Activated CD8-positive, alpha-beta T cell treated with anti-CD3 and anti-CD28 coated beads for 36 hours (primary cell): ENCODE measurements at regions of chr2 and their contacts with region 1.

Region 1: DNA sequence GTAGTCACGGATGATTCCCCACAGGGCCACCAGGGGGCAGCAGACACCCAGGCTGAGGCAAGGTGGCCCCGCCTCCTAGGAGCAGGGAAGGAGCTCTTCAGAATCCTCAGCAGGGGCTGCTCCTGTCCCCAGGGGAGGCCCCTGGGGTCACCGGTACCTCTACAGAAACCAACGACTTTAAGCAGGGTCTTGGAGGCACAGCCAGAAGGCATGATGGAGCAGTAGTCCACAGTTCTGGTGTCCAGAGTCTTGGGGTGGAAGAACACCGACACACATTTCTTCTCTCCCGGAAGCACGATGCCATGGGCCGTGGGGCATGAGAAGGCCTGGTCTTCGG is 11.5 kb downstream of the CFAP65 start:
- DNase-seq: peak; percentile 86
- ATAC-seq: peak; percentile 95
- H3K4me3 Mint-ChIP-seq: no peak overlapping the region
- H3K27ac Mint-ChIP-seq: no peak overlapping the region
- H3K4me1 Mint-ChIP-seq: no peaks in the 10 kb centered on the region
- H3K27me3 Mint-ChIP-seq: peaks cover 14% of the 10 kb centered on the region
- CTCF ChIP-seq: peak; percentile 92

Region 2: DNA sequence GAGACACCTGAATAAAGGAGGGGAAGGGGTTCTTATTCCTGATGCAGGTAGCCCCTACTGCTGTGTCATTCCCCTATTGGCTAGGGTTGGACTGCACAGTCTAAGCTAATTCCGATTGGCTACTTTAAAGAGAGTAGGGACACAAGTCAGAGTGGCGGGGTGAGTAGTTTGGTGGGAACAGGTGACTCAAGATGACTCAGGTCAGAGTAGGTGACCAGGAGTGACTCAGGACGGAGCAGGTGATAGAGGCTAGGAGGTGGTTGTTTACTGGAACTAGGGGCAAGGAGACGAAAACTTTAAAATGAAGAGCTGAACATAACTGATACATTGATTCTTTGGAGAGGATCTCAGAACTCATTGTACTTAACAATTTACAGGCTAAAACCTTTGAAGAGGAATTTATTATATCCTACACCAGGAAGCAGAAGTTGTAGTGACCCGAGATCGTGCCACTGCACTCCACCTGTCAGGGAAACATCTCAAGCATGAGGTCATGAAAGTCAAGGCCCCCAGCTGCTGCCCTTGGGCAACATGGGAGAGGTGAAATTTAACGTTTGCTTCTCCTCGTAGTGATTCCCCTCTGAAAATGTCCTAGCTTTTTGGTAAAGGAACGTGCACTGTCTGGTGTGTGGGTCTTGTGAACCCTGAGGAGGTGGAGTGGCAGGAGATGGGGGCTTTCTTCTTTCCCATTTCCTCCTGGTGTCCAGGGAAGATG is 252.4 kb before region 1 on chr2:
- CTCF ChIA-PET with region 1: no interaction called
- POLR2A ChIA-PET with region 1: no interaction called
- intact Hi-C with region 1: no loop called
- DNase-seq: no peak
- ATAC-seq: no peak
- H3K4me3 Mint-ChIP-seq: no peak overlapping the region
- H3K27ac Mint-ChIP-seq: no peak overlapping the region
- H3K4me1 Mint-ChIP-seq: peaks cover 5% of the 10 kb centered on the region
- H3K27me3 Mint-ChIP-seq: peaks cover 25% of the 10 kb centered on the region
- CTCF ChIP-seq: no peak

Region 3: GRCh38 chr2:218944759-218945404 is 84.9 kb before region 1 on chr2:
- CTCF ChIA-PET with region 1: no interaction called
- POLR2A ChIA-PET with region 1: no interaction called
- intact Hi-C with region 1: no loop called
- DNase-seq: no peak
- ATAC-seq: no peak
- H3K4me3 Mint-ChIP-seq: no peak overlapping the region
- H3K27ac Mint-ChIP-seq: no peak overlapping the region
- H3K4me1 Mint-ChIP-seq: no peaks in the 10 kb centered on the region
- H3K27me3 Mint-ChIP-seq: peaks cover 33% of the 10 kb centered on the region
- CTCF ChIP-seq: no peak

Region 4: GRCh38 chr2:219002395-219003266 is 27.2 kb before region 1 on chr2:
- CTCF ChIA-PET with region 1: interaction called, 11 read pairs
- POLR2A ChIA-PET with region 1: no interaction called
- intact Hi-C with region 1: no loop called
- DNase-seq: peak; percentile 77
- ATAC-seq: peak; percentile 47
- H3K4me3 Mint-ChIP-seq: peak overlapping the region; percentile 66
- H3K27ac Mint-ChIP-seq: no peak overlapping the region
- H3K4me1 Mint-ChIP-seq: peaks cover 11% of the 10 kb centered on the region
- H3K27me3 Mint-ChIP-seq: peaks cover 62% of the 10 kb centered on the region
- CTCF ChIP-seq: peak; percentile 46

Region 5: DNA sequence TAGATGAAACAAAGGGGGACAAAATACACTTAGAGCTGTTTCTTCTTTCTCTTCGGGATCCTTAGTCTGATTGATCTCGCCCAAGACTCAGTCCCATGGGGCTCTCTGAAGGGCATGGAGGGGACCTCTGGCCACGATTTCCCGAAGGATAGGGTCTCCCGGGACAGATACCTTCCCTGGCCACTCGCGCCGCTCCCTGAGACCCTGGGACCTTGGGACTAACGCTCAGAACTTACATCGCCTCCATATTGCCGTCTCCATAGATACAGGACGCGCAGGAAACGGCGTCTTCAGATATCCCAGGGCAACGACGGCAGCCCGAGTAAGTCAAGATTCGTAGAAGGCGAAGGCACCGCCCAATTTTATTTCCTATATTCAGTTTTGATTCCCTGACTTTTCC is 11.5 kb after region 1 on chr2 and contains the start of gene CFAP65:
- CTCF ChIA-PET with region 1: interaction called, 29 read pairs
- POLR2A ChIA-PET with region 1: no interaction called
- intact Hi-C with region 1: no loop called
- DNase-seq: peak; percentile 64
- ATAC-seq: peak; percentile 60
- H3K4me3 Mint-ChIP-seq: peak within 1 kb of the TSS; percentile 46
- H3K27ac Mint-ChIP-seq: no peak within 1 kb of the TSS
- H3K4me1 Mint-ChIP-seq: peaks cover 6% of the 10 kb centered on the region
- H3K27me3 Mint-ChIP-seq: peaks cover 58% of the 10 kb centered on the region
- CTCF ChIP-seq: no peak
- total RNA-seq, gene CFAP65: not detected

Region 6: DNA sequence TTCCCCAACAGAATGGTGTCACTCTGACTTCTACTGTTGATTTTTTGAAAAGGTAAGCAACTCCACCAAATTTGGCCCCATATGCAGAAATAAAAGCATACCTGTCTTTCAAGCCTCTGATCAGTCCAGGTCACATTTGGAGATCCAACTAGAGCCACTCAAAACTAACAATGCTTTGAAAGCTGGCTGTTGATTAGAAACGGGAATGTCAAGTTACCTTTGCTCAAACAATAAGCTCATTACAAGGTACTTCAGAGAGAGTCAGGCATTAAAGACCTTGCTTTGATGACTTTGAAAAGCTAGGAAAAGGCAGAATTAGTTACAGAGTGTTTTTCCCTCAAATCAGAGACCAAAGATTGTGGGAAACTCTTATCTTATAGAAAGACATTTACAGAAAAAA is 35.7 kb after region 1 on chr2:
- CTCF ChIA-PET with region 1: interaction called, 15 read pairs
- POLR2A ChIA-PET with region 1: no interaction called
- intact Hi-C with region 1: no loop called
- DNase-seq: no peak
- ATAC-seq: no peak
- H3K4me3 Mint-ChIP-seq: no peak overlapping the region
- H3K27ac Mint-ChIP-seq: no peak overlapping the region
- H3K4me1 Mint-ChIP-seq: peaks cover 2% of the 10 kb centered on the region
- H3K27me3 Mint-ChIP-seq: peaks cover 28% of the 10 kb centered on the region
- CTCF ChIP-seq: no peak

Region 7: GRCh38 chr2:219109471-219109870 is 79.7 kb after region 1 on chr2:
- CTCF ChIA-PET with region 1: interaction called, 17 read pairs
- POLR2A ChIA-PET with region 1: no interaction called
- intact Hi-C with region 1: no loop called
- DNase-seq: peak; percentile 93
- ATAC-seq: peak; percentile 96
- H3K4me3 Mint-ChIP-seq: no peak overlapping the region
- H3K27ac Mint-ChIP-seq: peak overlapping the region; percentile 60
- H3K4me1 Mint-ChIP-seq: peaks cover 45% of the 10 kb centered on the region
- H3K27me3 Mint-ChIP-seq: no peaks in the 10 kb centered on the region
- CTCF ChIP-seq: no peak

Region 8: DNA sequence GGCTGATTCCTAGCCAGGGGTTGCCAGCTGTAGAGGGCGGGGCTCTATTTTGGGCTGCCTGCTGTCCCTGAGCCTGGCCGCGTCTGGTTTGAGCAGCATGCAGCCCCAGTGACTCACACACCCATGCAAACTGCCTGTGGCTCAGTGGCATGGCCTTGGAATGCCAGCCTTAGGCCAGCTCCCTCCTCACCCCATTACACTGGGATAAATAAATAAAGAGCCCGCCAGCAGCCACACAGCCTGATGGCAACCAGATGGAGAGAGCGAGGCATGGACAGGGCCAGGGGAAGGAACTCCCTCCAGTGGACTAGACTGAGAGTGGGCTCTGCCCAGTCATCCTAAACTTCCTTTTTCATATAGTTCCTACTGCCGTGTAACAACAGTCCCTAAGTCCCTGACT is 112.5 kb after region 1 on chr2:
- CTCF ChIA-PET with region 1: interaction called, 11 read pairs
- POLR2A ChIA-PET with region 1: no interaction called
- intact Hi-C with region 1: no loop called
- DNase-seq: no peak
- ATAC-seq: no peak
- H3K4me3 Mint-ChIP-seq: no peak overlapping the region
- H3K27ac Mint-ChIP-seq: no peak overlapping the region
- H3K4me1 Mint-ChIP-seq: no peaks in the 10 kb centered on the region
- H3K27me3 Mint-ChIP-seq: no peaks in the 10 kb centered on the region
- CTCF ChIP-seq: no peak